ENCODE measurements at regions of chr2 and their contacts with region 1.

Region 1: DNA sequence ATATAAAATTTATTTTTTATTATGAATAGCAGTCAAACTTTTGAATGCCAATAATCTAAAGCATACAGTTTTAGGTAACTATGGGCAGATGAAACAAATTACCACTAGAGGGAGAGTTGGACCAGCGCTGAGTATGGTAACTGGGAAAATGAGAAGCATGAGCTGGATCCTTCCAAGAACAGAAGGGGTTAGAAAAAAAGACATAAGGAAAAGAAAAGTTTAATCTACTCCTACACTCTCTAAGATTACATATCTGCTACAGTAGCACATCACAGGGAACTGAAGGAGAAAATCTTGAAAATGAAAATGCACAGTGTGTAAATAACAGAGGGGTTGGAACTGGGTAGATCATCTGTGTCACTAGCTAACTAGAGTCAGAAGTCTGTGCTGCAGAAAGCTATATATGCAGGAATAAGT is 15.5 kb downstream of the REG3G start:
- DNase-seq: no peak
- H3K4me3 ChIP-seq: no peak overlapping the region
- H3K27ac ChIP-seq: no peak overlapping the region
- H3K4me1 ChIP-seq: no peaks in the 10 kb centered on the region
- H3K27me3 ChIP-seq: no peaks in the 10 kb centered on the region
- CTCF ChIP-seq: peak in 2 of 3 experiments; percentile 59 to 67; a peak in 3 of 4 replicates
- EP300 ChIP-seq: no peak
- POLR2A ChIP-seq: no peak
- RAD21 ChIP-seq: peak; percentile 73 to 80

Region 2: GRCh38 chr2:78739282-78739681 is 301.8 kb before region 1 on chr2:
- CTCF ChIA-PET with region 1: no interaction called
- POLR2A ChIA-PET with region 1: no interaction called
- DNase-seq: no peak
- H3K4me3 ChIP-seq: no peak overlapping the region
- H3K27ac ChIP-seq: no peak overlapping the region
- H3K4me1 ChIP-seq: no peaks in the 10 kb centered on the region
- H3K27me3 ChIP-seq: no peaks in the 10 kb centered on the region
- CTCF ChIP-seq: no peak
- EP300 ChIP-seq: no peak
- POLR2A ChIP-seq: no peak
- RAD21 ChIP-seq: no peak

Region 3: DNA sequence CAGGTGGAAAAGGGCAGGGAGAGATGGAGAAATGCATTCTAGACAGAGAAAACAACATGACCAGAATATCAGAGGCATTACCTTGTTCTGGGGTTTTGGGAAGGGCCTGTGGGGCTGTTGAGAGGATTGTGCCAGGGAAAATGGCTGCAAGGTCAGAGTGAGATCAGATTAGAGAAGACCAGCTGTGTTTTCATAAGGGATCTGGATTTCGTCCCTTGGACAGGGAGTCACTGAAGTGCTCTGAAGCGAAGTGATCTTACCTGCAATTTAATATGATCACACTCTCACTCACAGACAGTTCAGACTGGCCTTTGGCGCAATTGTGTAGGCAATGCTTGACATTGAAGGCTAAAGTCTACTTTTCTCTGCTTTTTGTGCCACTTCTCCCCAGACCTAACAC is 35.8 kb before region 1 on chr2:
- CTCF ChIA-PET with region 1: interaction called, 12 read pairs
- POLR2A ChIA-PET with region 1: no interaction called
- DNase-seq: no peak
- H3K4me3 ChIP-seq: no peak overlapping the region
- H3K27ac ChIP-seq: no peak overlapping the region
- H3K4me1 ChIP-seq: no peaks in the 10 kb centered on the region
- H3K27me3 ChIP-seq: no peaks in the 10 kb centered on the region
- CTCF ChIP-seq: no peak
- EP300 ChIP-seq: no peak
- POLR2A ChIP-seq: no peak
- RAD21 ChIP-seq: no peak

Region 4: GRCh38 chr2:79025421-79025820 is 15.6 kb before region 1 on chr2 and contains the start of gene REG3G:
- CTCF ChIA-PET with region 1: interaction called, 18 read pairs
- POLR2A ChIA-PET with region 1: no interaction called
- DNase-seq: no peak
- H3K4me3 ChIP-seq: no peak within 1 kb of the TSS
- H3K27ac ChIP-seq: no peak within 1 kb of the TSS
- H3K4me1 ChIP-seq: no peaks in the 10 kb centered on the region
- H3K27me3 ChIP-seq: no peaks in the 10 kb centered on the region
- CTCF ChIP-seq: no peak
- EP300 ChIP-seq: no peak
- POLR2A ChIP-seq: no peak
- RAD21 ChIP-seq: no peak
- total RNA-seq, gene REG3G: not detected in 2 replicates

Region 5: GRCh38 chr2:79071078-79071477 is 30.0 kb after region 1 on chr2:
- CTCF ChIA-PET with region 1: interaction called, 12 read pairs
- POLR2A ChIA-PET with region 1: no interaction called
- DNase-seq: no peak
- H3K4me3 ChIP-seq: no peak overlapping the region
- H3K27ac ChIP-seq: no peak overlapping the region
- H3K4me1 ChIP-seq: no peaks in the 10 kb centered on the region
- H3K27me3 ChIP-seq: no peaks in the 10 kb centered on the region
- CTCF ChIP-seq: no peak
- EP300 ChIP-seq: no peak
- POLR2A ChIP-seq: no peak
- RAD21 ChIP-seq: no peak

Region 6: GRCh38 chr2:79200762-79201161 is 159.7 kb after region 1 on chr2:
- CTCF ChIA-PET with region 1: interaction called, 31 read pairs
- POLR2A ChIA-PET with region 1: no interaction called
- DNase-seq: no peak
- H3K4me3 ChIP-seq: peak overlapping the region in 1 of 4 experiments; percentile 19; a peak in 1 of 8 replicates
- H3K27ac ChIP-seq: no peak overlapping the region
- H3K4me1 ChIP-seq: peaks cover 0 to 4% (median 1%) of the 10 kb centered on the region in 4 experiments; a peak in 3 of 7 replicates
- H3K27me3 ChIP-seq: no peaks in the 10 kb centered on the region
- CTCF ChIP-seq: no peak
- EP300 ChIP-seq: no peak
- POLR2A ChIP-seq: no peak
- RAD21 ChIP-seq: no peak

Region 7: GRCh38 chr2:79210274-79210917 is 169.4 kb after region 1 on chr2:
- CTCF ChIA-PET with region 1: interaction called, 49 read pairs
- POLR2A ChIA-PET with region 1: no interaction called
- DNase-seq: no peak
- H3K4me3 ChIP-seq: no peak overlapping the region
- H3K27ac ChIP-seq: no peak overlapping the region
- H3K4me1 ChIP-seq: peaks cover 0 to 4% (median 2%) of the 10 kb centered on the region in 4 experiments; a peak in 3 of 7 replicates
- H3K27me3 ChIP-seq: peaks cover 0 to 1% (median 0%) of the 10 kb centered on the region in 4 experiments; a peak in 1 of 7 replicates
- CTCF ChIP-seq: no peak
- EP300 ChIP-seq: no peak
- POLR2A ChIP-seq: no peak
- RAD21 ChIP-seq: no peak

Region 8: GRCh38 chr2:79219383-79219988 is 178.4 kb after region 1 on chr2:
- CTCF ChIA-PET with region 1: interaction called, 66 read pairs
- POLR2A ChIA-PET with region 1: no interaction called
- DNase-seq: peak in 1 of 2 experiments; percentile 66
- H3K4me3 ChIP-seq: no peak overlapping the region
- H3K27ac ChIP-seq: no peak overlapping the region
- H3K4me1 ChIP-seq: no peaks in the 10 kb centered on the region
- H3K27me3 ChIP-seq: no peaks in the 10 kb centered on the region
- CTCF ChIP-seq: peak in 2 of 3 experiments; percentile 73 to 75; a peak in 3 of 4 replicates
- EP300 ChIP-seq: no peak
- POLR2A ChIP-seq: no peak
- RAD21 ChIP-seq: peak; percentile 91 to 93

Measured in H1 (cell line).